ENCODE measurements at regions of chr1 and their contacts with region 1.

Region 1: GRCh38 chr1:117895482-117896114 is 33.8 kb downstream of the GDAP2 start:
- DNase-seq: peak; percentile 64 to 87 (median 71)
- H3K4me3 ChIP-seq: no peak overlapping the region
- H3K27ac ChIP-seq: no peak overlapping the region
- H3K4me1 ChIP-seq: peaks cover 0 to 7% of the 10 kb centered on the region in 2 donors
- H3K27me3 ChIP-seq: no peaks in the 10 kb centered on the region
- CTCF ChIP-seq: peak; percentile 55 to 81 (median 67)
- POLR2A ChIP-seq: no peak

Region 2: DNA sequence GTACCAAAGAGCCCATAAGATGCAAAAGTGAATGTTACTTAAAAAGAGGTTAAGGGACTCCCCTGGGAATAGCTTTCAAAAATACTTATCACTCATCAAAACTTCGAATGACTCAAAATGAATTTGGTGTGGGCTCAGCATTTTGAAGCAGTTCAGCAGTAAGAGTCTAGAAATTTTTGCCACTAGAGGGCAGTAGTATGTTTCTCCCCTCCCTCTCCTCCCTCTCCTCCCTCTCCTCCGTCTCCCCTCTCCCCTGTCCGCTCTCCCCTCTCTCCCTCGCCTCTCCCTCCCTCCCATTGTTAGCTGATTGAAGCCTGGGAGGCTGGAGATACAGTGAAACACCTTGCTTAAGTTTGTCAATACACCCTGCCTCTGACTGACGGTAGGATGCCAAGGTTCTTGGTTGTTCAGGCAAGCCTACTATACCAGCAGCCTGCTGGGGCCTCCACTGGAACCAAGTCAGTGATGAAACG is 360.6 kb before region 1 on chr1:
- intact Hi-C with region 1: loop called in 1 of 2 experiments (anchors 10 kb)
- DNase-seq: peak in 5 of 7 donors; percentile 13 to 30 (median 27)
- H3K4me3 ChIP-seq: no peak overlapping the region
- H3K27ac ChIP-seq: no peak overlapping the region
- H3K4me1 ChIP-seq: no peaks in the 10 kb centered on the region
- H3K27me3 ChIP-seq: no peaks in the 10 kb centered on the region
- CTCF ChIP-seq: peak; percentile 48 to 77 (median 64)
- POLR2A ChIP-seq: no peak